Common myeloid progenitor, CD34-positive (primary cell): ENCODE measurements at regions of chr19 and their contacts with region 1.

Region 1: GRCh38 chr19:48993175-48994034 is at the starts of genes GYS1 and RUVBL2:
- DNase-seq: peak; percentile 99 to 100 (median 100)
- H3K4me3 ChIP-seq: peak within 1 kb of the TSS; percentile 79 to 97 (median 92)
- H3K27ac ChIP-seq: peak within 1 kb of the TSS; percentile 94 to 98
- H3K4me1 ChIP-seq: peaks cover 4 to 29% (median 29%) of the 10 kb centered on the region in 4 experiments
- H3K27me3 ChIP-seq: no peaks in the 10 kb centered on the region

Region 2: DNA sequence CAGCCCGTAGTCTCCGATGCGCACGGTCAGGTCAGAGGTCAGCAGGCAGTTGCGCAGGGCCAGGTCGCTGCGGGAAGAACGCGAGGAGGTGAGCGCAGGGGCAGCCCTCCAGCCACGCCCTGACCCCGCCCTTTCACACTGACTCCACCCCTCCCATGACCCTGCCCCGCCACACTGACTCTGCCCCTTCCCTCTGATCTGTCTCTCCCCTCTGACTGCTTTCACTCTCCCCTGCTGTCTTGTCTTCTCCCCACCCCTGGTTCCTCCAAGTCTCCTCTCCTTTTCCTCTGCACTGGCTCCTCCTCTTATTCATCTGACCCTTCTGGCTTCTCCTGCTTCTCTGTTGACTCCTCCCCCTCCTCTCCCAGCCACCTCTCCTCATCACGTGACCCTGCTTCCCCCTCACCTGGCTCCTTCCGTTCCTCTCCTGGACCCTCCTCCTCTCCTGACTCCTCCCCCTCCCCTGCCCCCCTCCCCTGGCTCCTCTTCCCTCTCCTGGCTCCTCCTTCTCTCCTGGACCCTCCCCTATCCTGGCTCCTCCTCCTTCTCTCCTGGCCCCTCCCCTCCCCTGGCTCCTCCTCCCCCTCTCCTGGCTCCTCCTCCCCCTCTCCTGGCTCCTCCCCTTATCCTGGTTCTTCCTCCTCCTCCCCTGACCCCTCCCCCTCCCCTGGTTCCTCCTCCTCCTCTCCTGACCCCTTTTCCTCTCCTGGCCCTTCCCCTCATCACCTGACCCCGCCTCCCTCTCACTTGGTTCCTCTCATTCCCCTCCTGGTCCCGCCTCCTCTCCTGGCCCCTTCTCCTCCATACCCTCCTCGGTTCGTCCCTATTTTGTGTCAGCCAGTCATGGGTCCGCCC is 491.7 kb before region 1 on chr19:
- CTCF ChIA-PET with region 1: no interaction called
- POLR2A ChIA-PET with region 1: no interaction called
- DNase-seq: peak; percentile 91 to 97 (median 96)
- H3K4me3 ChIP-seq: peak overlapping the region in 6 of 7 experiments; percentile 26 to 66 (median 58)
- H3K27ac ChIP-seq: no peak overlapping the region
- H3K4me1 ChIP-seq: peaks cover 0 to 17% (median 15%) of the 10 kb centered on the region in 4 experiments
- H3K27me3 ChIP-seq: peaks cover 0 to 30% (median 0%) of the 10 kb centered on the region in 5 experiments

Region 3: DNA sequence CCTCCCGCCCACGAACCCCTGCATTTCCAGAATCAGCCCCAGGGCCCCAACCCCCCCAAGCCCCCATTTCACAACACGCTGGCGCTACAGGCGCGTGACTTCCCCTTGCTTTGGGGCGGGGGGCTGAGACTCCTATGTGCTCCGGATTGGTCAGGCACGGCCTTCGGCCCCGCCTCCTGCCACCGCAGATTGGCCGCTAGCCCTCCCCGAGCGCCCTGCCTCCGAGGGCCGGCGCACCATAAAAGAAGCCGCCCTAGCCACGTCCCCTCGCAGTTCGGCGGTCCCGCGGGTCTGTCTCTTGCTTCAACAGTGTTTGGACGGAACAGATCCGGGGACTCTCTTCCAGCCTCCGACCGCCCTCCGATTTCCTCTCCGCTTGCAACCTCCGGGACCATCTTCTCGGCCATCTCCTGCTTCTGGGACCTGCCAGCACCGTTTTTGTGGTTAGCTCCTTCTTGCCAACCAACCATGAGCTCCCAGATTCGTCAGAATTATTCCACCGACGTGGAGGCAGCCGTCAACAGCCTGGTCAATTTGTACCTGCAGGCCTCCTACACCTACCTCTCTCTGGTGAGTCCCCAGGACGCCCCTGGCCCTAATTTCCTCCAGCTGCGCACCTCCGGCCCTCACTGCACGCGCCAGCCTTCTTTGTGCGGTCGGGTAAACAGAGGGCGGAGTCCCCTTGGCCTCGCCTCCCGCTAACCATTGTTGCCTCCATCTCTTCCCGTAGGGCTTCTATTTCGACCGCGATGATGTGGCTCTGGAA is 28.2 kb before region 1 on chr19 and contains the start of gene FTL:
- CTCF ChIA-PET with region 1: interaction called, 7 read pairs
- POLR2A ChIA-PET with region 1: interaction called, 11 read pairs
- DNase-seq: peak; percentile 95 to 98 (median 97)
- H3K4me3 ChIP-seq: peak within 1 kb of the TSS; percentile 81 to 96 (median 92)
- H3K27ac ChIP-seq: peak within 1 kb of the TSS; percentile 97 to 98
- H3K4me1 ChIP-seq: peaks cover 13 to 59% (median 51%) of the 10 kb centered on the region in 4 experiments
- H3K27me3 ChIP-seq: no peaks in the 10 kb centered on the region

Region 4: GRCh38 chr19:48975947-48976847 is 17.2 kb before region 1 on chr19:
- CTCF ChIA-PET with region 1: interaction called, 19 read pairs
- POLR2A ChIA-PET with region 1: interaction called, 4 read pairs
- DNase-seq: peak; percentile 57 to 87 (median 82)
- H3K4me3 ChIP-seq: no peak overlapping the region
- H3K27ac ChIP-seq: no peak overlapping the region
- H3K4me1 ChIP-seq: no peaks in the 10 kb centered on the region
- H3K27me3 ChIP-seq: no peaks in the 10 kb centered on the region

Region 5: GRCh38 chr19:48982280-48982679 is 11.1 kb before region 1 on chr19:
- CTCF ChIA-PET with region 1: interaction called, 21 read pairs
- POLR2A ChIA-PET with region 1: no interaction called
- DNase-seq: peak in 1 of 3 donors; percentile 34
- H3K4me3 ChIP-seq: no peak overlapping the region
- H3K27ac ChIP-seq: no peak overlapping the region
- H3K4me1 ChIP-seq: peaks cover 0 to 3% (median 0%) of the 10 kb centered on the region in 4 experiments
- H3K27me3 ChIP-seq: no peaks in the 10 kb centered on the region

Region 6: GRCh38 chr19:49042177-49042576 is 48.8 kb after region 1 on chr19:
- CTCF ChIA-PET with region 1: no interaction called
- POLR2A ChIA-PET with region 1: no interaction called
- DNase-seq: no peak
- H3K4me3 ChIP-seq: no peak overlapping the region
- H3K27ac ChIP-seq: no peak overlapping the region
- H3K4me1 ChIP-seq: no peaks in the 10 kb centered on the region
- H3K27me3 ChIP-seq: no peaks in the 10 kb centered on the region

Region 7: DNA sequence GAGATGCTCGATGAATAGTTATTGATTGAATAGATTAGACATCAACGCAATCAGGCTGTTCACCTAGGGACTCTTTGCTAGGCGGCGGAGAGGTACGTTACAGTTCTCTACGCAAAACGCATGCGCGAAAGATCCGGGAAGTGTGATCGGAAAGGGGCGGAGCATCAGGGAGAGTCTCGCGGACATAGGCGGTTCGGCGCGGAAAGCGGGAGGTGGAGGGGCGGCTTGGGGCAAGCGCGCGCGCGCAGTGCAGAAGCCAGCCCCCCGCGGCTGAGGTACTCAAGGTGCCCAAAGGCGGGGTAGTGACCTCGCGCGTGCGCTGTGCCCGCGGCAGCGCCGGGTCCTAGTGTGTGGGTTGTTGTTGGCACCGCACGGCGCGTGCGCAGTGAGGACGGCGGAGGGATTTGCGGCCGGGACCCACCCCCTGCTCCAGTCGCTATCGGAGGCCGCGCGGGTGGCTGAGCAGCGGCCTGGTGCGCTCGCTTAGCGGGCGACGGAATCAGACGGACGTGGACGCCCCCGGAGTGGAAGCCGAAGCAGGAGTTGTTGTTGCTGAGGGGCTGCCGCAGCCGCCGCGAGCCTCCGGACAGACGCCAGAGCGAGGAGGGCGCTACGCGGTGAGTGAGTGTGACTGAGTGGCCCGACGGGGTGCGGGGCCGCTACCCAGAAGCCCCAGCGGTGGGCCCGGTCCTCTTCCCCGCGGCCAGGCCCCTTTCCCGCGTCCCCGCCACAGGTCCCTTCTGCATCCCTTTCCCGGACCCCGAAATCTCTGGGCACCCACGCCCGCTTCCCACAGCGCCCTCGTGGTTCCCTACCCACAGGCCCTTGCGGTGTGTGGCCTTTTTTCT is 91.8 kb after region 1 on chr19 and contains the start of gene SNRNP70:
- CTCF ChIA-PET with region 1: no interaction called
- POLR2A ChIA-PET with region 1: no interaction called
- DNase-seq: peak; percentile 100
- H3K4me3 ChIP-seq: peak within 1 kb of the TSS; percentile 82 to 99 (median 93)
- H3K27ac ChIP-seq: peak within 1 kb of the TSS; percentile 78 to 93
- H3K4me1 ChIP-seq: peaks cover 0 to 23% (median 20%) of the 10 kb centered on the region in 4 experiments
- H3K27me3 ChIP-seq: no peaks in the 10 kb centered on the region